ENCODE measurements at regions of chr10 and their contacts with region 1.

Region 1: GRCh38 chr10:30456266-30456665 is 22.3 kb downstream of the MAP3K8 start:
- DNase-seq: no peak
- H3K4me3 ChIP-seq: no peak overlapping the region
- H3K27ac ChIP-seq: no peak overlapping the region
- H3K4me1 ChIP-seq: peaks cover 10% of the 10 kb centered on the region
- H3K27me3 ChIP-seq: no peaks in the 10 kb centered on the region
- CTCF ChIP-seq: no peak

Region 2: DNA sequence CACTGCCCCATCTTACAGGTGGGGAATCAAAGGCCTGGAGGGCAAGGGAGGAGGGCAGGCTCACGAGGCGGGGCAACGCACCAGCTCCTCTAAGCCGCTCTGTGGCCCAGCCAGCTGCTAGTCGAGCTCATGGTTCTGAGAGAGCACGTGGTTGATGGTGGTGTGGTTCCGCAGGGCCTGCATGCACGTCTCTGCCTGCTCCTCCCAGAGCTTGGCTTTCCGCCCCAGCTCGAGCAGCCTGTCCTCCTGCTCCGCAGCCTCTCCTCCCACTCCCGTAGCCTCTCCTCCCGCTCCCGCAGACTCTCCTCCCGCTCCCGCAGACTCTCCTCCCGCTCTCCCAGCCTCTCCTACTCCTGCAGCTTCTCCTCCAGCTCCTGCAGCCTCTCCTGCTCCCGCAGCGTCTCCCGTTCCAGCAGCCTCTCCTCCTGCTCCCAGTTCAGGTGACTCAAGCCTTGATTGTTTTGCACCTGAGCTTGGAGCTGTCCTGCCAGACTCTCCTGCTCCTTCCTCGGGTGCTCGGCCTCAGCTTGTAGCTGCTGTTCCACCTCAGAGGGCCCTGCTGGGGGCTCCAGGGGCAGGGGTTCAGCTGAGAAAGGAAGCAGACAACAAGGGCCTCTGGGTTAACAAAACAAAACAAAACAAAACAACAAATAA is 88.1 kb before region 1 on chr10:
- CTCF ChIA-PET with region 1: no interaction called
- dilution Hi-C with region 1: loop called (anchors 5 kb)
- in situ Hi-C with region 1: no loop called
- intact Hi-C with region 1: no loop called
- DNase-seq: peak; percentile 39
- H3K4me3 ChIP-seq: peak overlapping the region in 1 of 3 experiments; percentile 13
- H3K27ac ChIP-seq: no peak overlapping the region
- H3K4me1 ChIP-seq: peaks cover 18% of the 10 kb centered on the region
- H3K27me3 ChIP-seq: peaks cover 8% of the 10 kb centered on the region
- CTCF ChIP-seq: no peak

Region 3: GRCh38 chr10:30433730-30434272 is 22.5 kb before region 1 on chr10 and contains the start of gene MAP3K8:
- CTCF ChIA-PET with region 1: no interaction called
- dilution Hi-C with region 1: no loop called
- in situ Hi-C with region 1: no loop called
- intact Hi-C with region 1: no loop called
- DNase-seq: peak; percentile 82
- H3K4me3 ChIP-seq: peak within 1 kb of the TSS; percentile 68 to 84 (median 79)
- H3K27ac ChIP-seq: peak within 1 kb of the TSS; percentile 38
- H3K4me1 ChIP-seq: peaks cover 20% of the 10 kb centered on the region
- H3K27me3 ChIP-seq: no peaks in the 10 kb centered on the region
- CTCF ChIP-seq: no peak
- total RNA-seq, gene MAP3K8: 1.2 to 3.8 TPM